Posterior cingulate gyrus (tissue), 11 donors: ENCODE measurements at regions of chr11 and their contacts with region 1.

Region 1: DNA sequence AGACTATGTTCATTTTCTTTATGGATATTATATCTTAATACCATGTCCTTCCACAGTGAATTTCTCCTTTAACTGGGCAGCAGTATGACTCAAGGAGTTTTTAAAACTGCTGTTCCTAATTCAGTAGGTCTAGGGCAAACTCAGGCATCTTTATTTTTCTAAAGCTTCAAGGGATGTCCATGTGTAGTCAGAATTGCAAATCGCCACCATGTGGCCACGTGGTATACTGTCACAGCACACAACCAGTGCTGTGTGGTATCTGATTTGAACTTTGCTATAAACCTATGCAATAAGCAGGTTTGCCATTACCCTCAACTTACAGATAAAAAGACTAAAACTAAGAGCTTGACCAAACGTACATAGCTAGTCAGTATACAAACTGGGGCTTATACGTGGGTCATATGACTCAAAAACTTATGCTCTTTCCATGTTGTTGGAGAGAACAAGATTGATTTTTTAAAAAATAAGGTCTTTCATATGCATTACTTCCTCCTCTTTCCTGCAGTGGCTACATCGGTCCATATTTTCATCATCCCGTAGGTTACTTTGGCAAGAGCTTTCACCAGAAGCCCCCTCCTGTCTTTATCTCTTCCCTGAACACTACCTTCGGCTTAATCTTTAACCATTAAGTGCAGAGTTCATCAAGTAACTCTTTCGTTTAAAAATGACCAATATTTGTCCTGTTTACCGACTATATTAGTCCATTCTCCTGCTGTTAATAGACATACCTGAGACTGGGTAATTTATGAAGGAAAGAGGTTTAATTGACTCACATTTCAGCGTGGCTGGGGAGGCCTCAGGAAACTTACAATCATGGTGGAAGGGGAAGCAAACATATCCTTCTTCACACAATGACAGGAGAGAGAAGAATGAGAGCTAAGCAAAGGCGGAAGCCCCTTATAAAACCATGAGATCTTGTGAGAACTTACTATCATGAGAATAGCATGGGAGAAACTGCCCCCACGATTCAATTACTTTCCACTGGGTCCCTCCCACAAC is 8.0 kb upstream of the HTATIP2 start:
- DNase-seq: peak in 6 of 10 donors; percentile 34 to 89 (median 42)

Region 2: DNA sequence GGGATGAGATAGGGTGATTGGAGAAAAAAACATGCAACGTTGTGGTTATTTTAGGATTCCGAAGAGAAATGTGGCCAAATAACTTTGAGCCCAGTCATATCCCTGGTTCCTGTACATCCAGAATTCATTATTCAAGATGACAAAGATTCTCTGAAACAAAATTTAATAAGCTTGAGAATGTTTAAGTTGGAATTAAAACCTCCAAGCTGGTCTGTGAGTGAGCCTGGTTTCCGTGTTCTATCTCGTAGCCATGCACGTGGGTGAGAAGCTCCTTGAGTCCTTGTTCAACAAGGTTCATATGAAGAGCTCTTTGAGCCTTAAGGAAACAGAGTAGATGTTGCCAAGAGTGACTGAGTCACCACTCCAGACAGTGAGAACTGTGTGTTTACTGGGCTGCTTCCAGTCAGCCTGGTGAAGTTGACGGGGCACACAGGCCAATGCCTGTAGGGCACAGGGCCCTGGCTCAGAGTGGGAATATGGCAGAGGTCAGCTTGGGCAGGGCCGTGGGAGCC is 436.4 kb before region 1 on chr11:
- intact Hi-C with region 1: loop called (anchors 10 kb)
- DNase-seq: peak in 2 of 10 donors; percentile 23 to 81

Region 3: DNA sequence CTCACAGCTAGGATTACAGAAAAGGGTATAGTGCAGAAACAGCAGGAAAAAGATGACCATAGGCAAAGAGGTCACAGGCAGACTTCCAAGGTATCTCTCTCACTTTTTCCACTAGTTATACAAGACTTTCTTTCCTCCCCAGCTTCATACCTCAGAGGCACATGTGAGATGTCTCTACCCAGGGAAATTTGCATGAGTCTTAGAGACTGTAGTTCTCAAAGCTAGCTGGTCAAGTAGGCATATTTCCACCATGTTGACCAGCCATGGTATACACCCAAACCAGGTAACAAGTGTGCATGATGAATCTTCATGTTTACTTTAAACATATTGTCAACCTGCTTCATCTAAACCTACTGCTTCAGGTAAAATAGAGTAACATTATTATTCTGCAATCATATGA is 59.9 kb after region 1 on chr11:
- intact Hi-C with region 1: no loop called
- DNase-seq: no peak